ENCODE measurements at regions of chr2 and their contacts with region 1.

Region 1: DNA sequence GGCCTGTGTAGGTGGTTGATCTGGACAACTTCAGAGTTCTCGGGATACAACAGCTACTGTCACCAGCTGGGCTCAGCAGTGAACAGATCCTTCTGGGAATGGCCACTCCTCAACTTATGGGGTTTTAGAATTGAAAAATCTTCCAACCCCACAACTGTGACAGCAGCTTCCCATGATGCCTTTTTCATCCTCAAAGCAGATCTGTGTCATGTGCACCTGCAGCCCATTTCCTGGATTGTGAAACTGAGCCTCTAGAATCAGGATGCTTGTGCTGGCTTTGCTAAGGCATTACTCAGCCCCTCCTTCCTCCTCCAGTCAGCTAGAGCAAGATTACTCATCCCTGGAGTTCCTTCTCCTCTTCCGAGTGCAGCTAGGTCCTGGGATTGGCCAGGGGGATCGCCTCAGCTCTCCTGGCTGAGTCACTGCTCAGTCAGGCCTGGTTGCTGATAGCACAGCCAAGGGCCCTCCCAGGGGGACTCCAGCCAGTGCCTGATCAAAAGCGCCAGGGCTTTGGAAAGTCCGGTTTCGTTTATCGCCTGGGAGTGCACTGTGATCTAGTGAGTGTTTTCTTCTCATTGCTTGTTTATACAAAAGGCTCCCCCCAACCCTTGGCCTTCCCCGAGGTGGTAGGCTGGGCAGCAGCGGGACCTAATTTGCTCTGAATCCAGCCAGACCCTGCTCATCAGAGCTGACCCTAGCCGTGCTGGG is 2.4 kb upstream of the LPIN1 start:
- DNase-seq: peak; percentile 93 to 98 (median 94)
- ATAC-seq: peak; percentile 92 to 96 (median 93)
- H3K4me3 ChIP-seq: peak overlapping the region in 9 of 12 donors; percentile 1 to 44 (median 24)
- H3K27ac ChIP-seq: peak overlapping the region in 11 of 12 donors; percentile 11 to 84 (median 63)
- H3K4me1 ChIP-seq: peaks cover 9 to 53% (median 28%) of the 10 kb centered on the region in 12 donors
- H3K27me3 ChIP-seq: no peaks in the 10 kb centered on the region
- CTCF ChIP-seq: peak in 1 of 12 donors; percentile 5
- POLR2A ChIP-seq: peak in 1 of 2 donors; percentile 15

Region 2: DNA sequence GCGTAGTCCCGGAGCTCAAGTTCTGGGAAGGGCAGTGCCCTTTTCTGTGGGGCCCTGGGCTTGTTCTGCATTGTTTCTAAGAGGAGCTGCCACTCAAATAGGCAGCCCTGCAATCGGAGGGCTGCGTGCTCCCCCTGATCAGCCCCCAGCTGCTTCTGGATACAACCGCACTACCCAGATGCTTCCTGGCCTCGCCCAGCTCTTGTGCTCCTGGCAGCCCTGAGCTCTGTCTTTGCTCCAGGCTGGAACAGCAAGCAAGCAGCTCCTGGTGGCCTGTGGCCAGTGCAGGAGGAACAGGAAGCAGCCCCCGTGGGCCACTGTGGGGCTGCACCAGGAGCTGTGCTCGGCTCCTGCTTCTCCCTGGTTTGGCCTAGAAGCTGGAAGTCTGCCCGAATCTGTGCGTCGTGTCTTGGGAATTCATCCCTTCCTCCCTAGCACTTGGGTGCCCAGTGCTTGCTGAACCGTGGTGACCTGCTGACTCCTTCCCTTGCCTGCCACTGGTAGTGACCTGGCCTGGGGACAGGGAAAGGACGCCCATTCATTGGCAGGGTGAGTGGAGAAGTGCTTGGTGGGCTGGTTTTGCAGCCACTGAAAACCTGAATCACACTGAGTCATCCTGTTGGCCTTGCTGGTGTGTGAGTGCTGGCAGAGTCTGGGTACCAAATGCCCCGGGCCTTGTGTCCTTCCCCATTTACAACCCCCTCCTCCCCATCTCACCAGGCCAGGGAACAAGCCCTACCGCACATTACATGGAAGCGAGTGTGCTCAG is 46.7 kb before region 1 on chr2:
- intact Hi-C with region 1: loop called in 4 of 10 experiments (anchors 5 kb)
- DNase-seq: peak in 4 of 5 donors; percentile 37 to 73 (median 60)
- ATAC-seq: peak; percentile 1 to 43 (median 23)
- H3K4me3 ChIP-seq: no peak overlapping the region
- H3K27ac ChIP-seq: peak overlapping the region in 11 of 12 donors; percentile 26 to 80 (median 70)
- H3K4me1 ChIP-seq: peaks cover 2 to 40% (median 18%) of the 10 kb centered on the region in 12 donors
- H3K27me3 ChIP-seq: no peaks in the 10 kb centered on the region
- CTCF ChIP-seq: no peak
- POLR2A ChIP-seq: no peak

Region 3: GRCh38 chr2:11829947-11830707 is 86.1 kb after region 1 on chr2:
- intact Hi-C with region 1: no loop called
- DNase-seq: peak; percentile 69 to 79 (median 75)
- ATAC-seq: peak; percentile 85 to 92 (median 88)
- H3K4me3 ChIP-seq: peak overlapping the region in 10 of 12 donors; percentile 9 to 42 (median 24)
- H3K27ac ChIP-seq: peak overlapping the region in 11 of 12 donors; percentile 55 to 82 (median 71)
- H3K4me1 ChIP-seq: peaks cover 4 to 37% (median 21%) of the 10 kb centered on the region in 12 donors
- H3K27me3 ChIP-seq: no peaks in the 10 kb centered on the region
- CTCF ChIP-seq: peak in 9 of 12 donors; percentile 21 to 55 (median 39)
- POLR2A ChIP-seq: no peak

Region 4: DNA sequence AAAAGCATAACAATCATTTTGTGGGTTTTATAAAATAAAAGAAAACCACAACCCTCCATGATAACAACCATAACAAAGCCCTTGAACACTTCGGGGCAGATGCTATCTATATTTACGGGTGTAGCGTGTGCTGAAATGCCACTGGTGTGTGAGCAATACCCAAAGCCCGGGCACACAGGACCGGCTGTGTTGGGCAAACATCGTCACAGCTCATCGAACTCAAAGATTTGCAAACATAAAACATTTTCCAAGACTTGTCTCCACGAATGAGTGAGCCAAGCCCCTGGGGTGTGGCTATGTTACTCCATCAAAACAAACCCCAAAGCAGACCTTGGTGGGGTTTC is 292.6 kb after region 1 on chr2:
- intact Hi-C with region 1: no loop called
- DNase-seq: no peak
- ATAC-seq: no peak
- H3K4me3 ChIP-seq: no peak overlapping the region
- H3K27ac ChIP-seq: no peak overlapping the region
- H3K4me1 ChIP-seq: no peaks in the 10 kb centered on the region
- H3K27me3 ChIP-seq: no peaks in the 10 kb centered on the region
- CTCF ChIP-seq: no peak
- POLR2A ChIP-seq: no peak